ENCODE measurements at regions of chrX and their contacts with region 1.

Region 1: GRCh38 chrX:100994352-100995281 is 25.1 kb downstream of the ARL13A start:
- DNase-seq: peak in 1 of 9 donors; percentile 20
- ATAC-seq: no peak
- H3K4me3 ChIP-seq: no peak overlapping the region
- H3K4me3 Mint-ChIP-seq: no peak overlapping the region
- H3K27ac ChIP-seq: no peak overlapping the region
- H3K27ac Mint-ChIP-seq: peak overlapping the region in 2 of 9 donors; percentile 22 to 56
- H3K4me1 ChIP-seq: no peaks in the 10 kb centered on the region
- H3K4me1 Mint-ChIP-seq: peaks cover 0 to 23% (median 0%) of the 10 kb centered on the region in 7 donors
- H3K27me3 ChIP-seq: no peaks in the 10 kb centered on the region
- H3K27me3 Mint-ChIP-seq: no peaks in the 10 kb centered on the region

Region 2: DNA sequence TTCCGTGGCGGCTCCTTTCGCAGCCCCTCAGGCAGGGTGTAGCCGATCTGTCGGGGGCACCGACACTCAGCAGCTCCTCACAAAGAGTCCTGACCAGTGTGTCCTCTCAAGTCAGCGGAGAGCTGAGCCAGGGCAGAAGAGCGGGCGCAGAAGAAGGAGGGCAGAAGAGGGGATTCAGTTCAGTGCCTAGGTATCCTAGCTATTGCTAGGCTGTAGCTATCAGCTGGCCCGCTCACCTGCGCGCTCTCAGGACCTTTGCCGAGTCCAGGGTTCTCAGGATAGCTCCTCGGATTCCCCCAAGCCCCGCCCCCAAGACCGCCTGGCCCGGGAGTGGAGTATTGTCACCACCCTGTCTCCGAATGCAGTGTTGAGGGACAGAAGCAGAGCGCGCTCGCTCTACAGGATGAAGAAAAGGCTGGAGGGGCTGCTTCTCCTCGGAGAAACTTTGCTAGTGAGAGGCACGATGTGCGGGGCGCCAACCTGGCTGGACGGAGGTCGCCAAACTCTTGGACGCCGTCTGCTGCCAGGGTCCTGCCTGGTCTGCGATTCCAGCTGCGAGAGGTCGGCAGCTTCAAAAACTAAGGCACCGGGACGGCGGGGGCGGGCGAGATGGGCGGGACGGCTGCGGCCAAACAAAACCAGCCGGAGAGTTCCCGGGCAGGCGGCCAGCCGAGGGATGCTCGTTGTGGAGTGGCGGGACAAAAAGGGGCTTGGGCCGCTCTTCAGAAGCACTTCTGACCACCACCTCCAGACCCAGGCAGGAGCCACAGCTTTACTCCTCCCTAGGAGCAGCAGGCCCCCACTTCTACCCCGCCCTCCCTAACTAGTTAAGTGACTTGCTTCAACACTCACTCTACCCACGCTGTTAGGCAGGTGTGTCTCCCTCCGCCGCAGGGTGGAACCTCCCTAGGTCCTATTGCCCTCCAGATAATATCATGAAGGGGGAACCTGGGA is 65.7 kb before region 1 on chrX and contains the start of gene XKRX:
- CTCF ChIA-PET with region 1: no interaction called
- POLR2A ChIA-PET with region 1: no interaction called
- intact Hi-C with region 1: loop called in 1 of 2 experiments (anchors 10 kb)
- DNase-seq: peak in 8 of 9 donors; percentile 16 to 64 (median 41)
- ATAC-seq: peak; percentile 90
- H3K4me3 ChIP-seq: peak within 1 kb of the TSS; percentile 56
- H3K4me3 Mint-ChIP-seq: peak within 1 kb of the TSS; percentile 87 to 97 (median 95)
- H3K27ac ChIP-seq: peak within 1 kb of the TSS; percentile 65
- H3K27ac Mint-ChIP-seq: peak within 1 kb of the TSS in 8 of 9 donors; percentile 50 to 90 (median 86)
- H3K4me1 ChIP-seq: peaks cover 0 to 10% of the 10 kb centered on the region in 2 donors
- H3K4me1 Mint-ChIP-seq: peaks cover 8 to 57% (median 47%) of the 10 kb centered on the region in 7 donors
- H3K27me3 ChIP-seq: no peaks in the 10 kb centered on the region
- H3K27me3 Mint-ChIP-seq: no peaks in the 10 kb centered on the region
- total RNA-seq, gene XKRX: 0.10 to 3.4 (median 1.5) TPM